ENCODE measurements at regions of chr6 and their contacts with region 1.

Region 1: DNA sequence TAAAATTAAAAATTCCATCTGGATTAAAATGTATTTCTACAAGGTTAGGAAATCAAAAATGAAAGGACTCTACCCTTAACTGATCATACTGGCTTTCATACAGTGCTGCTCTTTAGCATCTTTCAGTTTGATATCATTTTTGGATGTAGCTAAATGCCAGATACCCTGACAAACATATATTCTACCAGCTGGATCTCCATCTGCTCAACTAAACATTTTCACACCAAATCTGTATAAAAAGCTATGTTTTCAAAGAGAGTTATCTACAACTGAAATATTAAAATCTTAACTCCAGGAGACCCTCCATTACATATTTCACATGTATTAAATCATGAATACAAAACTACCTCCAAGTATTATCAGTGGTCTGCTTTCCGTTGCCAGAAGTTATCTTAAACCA is 95.7 kb downstream of the EPHA7 start:
- DNase-seq: no peak
- ATAC-seq: no peak
- H3K4me3 ChIP-seq: no peak overlapping the region
- H3K27ac ChIP-seq: no peak overlapping the region
- H3K4me1 ChIP-seq: peaks cover 2% of the 10 kb centered on the region
- H3K27me3 ChIP-seq: no peaks in the 10 kb centered on the region

Region 2: GRCh38 chr6:92507552-92507951 is 816.1 kb before region 1 on chr6:
- intact Hi-C with region 1: no loop called
- DNase-seq: no peak
- ATAC-seq: no peak
- H3K4me3 ChIP-seq: no peak overlapping the region
- H3K27ac ChIP-seq: no peak overlapping the region
- H3K4me1 ChIP-seq: no peaks in the 10 kb centered on the region
- H3K27me3 ChIP-seq: no peaks in the 10 kb centered on the region

Region 3: DNA sequence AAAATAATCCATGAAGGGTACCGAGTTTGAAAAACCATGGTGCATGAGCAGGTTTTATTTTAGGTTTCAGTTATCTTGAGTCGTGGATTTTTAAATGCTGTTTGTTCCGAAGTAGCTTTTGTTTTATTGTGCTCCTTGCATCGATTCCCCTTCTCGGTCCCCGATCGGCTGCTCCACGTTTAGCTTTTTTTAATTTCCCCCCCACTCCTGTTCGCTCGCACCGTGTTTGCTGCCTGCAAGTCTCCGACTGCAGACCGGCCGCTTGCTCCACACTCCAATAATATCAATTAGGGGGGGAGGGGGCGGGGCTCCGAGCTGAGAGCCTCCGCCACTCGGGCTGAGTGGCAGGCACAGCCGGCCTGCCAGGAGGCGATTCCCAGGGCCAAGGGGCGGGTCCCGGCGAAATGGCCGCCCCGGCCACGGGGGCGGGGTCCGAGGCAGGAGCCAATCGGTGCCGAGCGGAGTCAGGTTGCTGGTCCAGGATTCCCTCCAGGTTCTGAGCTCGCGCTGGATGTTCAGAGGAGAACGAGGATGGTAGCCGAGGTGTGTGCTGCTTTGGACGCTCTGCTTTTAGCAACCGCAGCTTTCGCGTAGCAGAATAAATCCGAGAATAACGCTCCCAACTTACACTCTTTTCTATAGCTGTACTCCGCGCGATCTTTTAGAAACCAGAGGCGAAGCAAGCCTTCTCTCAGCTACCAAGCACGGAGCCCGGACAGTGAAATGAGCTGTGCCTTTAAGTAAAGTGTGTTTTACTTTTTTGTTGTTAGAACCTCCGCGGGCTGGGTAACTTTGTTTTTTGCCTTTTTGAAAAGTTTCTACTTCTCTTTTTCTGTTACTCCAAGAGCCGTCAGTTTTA is 95.9 kb after region 1 on chr6 and contains the start of gene EPHA7:
- intact Hi-C with region 1: loop called in 1 of 4 experiments (anchors 10 kb)
- DNase-seq: peak; percentile 92 to 97 (median 97)
- ATAC-seq: peak; percentile 98
- H3K4me3 ChIP-seq: peak within 1 kb of the TSS; percentile 88
- H3K27ac ChIP-seq: peak within 1 kb of the TSS; percentile 80
- H3K4me1 ChIP-seq: no peaks in the 10 kb centered on the region
- H3K27me3 ChIP-seq: peaks cover 2% of the 10 kb centered on the region
- total RNA-seq, gene EPHA7: 12.3 to 26.9 (median 20.5) TPM

Region 4: DNA sequence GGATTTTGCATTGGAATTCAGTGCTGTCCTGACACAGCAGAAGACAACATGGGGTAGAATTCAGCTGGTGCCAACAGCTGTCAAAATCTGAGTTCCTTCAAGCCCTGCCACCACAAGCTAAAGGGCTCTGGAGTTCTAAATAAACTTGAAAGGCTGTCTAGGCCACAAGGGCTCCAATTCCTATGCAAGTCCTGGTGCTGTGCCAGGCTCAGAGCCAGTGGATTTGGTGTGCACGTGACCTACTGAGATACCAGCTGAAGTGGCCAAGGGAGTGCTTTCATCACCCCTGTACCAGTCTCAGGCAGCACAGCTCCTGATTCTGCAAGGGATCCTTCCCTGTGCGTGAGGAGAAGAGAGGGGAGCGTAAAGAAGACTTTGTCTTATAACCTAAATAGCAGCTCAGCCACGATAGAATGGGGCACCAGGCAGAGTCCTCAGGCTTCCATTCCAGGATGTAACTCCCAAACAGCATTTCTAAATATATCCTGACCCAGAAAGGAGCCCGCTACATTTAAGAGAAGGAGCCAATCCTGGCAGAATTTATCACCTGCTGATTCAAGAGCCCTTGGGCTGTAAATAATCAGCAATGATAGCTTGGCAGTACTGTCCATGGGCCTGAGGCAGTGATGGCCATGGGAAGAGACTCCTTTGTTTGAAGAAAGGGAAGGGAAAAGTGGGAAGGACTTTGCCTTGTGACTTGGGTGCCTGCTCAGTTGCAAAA is 977.0 kb after region 1 on chr6:
- intact Hi-C with region 1: no loop called
- DNase-seq: peak; percentile 57 to 82 (median 75)
- ATAC-seq: peak; percentile 89 to 93
- H3K4me3 ChIP-seq: no peak overlapping the region
- H3K27ac ChIP-seq: no peak overlapping the region
- H3K4me1 ChIP-seq: no peaks in the 10 kb centered on the region
- H3K27me3 ChIP-seq: no peaks in the 10 kb centered on the region

Measured in right cardiac atrium (tissue), 5 donors.